ENCODE measurements at regions of chr1 and their contacts with region 1.

Region 1: DNA sequence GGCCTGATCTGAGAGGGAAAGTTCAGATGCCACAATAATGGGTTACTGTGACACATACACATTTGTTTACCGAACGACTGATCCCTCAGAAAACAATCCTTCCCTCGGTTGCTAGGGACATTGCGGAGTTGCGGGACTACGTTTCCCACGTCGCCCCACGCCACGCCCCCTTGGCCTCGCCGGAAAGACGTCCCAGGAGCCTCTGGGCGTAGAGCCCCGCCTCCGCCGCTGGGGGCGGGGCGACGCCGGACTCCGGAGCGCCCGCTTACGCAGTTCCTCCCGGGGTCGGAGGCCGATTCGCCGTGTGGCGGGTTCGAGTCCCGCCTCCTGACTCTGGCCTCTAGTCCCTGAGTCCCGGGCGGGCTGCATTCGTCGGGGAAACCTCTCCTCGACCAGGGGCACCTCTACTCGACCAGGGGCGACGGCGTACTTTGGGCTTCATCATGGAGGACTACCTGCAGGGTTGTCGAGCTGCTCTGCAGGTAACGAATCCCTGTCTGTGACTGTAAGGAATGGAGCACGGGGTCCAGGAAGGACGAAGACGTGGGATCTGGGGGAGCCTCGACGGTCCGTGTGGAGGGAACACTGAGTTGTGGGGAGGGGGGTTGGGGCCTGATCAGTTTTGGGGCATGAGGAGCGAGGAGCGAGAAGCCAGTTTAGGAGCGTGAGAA is at the start of gene PRUNE1:
- DNase-seq: peak; percentile 99
- ATAC-seq: peak; percentile 84
- H3K4me3 Mint-ChIP-seq: peak within 1 kb of the TSS; percentile 90
- H3K27ac Mint-ChIP-seq: peak within 1 kb of the TSS; percentile 96
- H3K4me1 Mint-ChIP-seq: peaks cover 63% of the 10 kb centered on the region
- H3K27me3 Mint-ChIP-seq: no peaks in the 10 kb centered on the region
- total RNA-seq, gene PRUNE1: 13.6 to 18.6 TPM

Region 2: GRCh38 chr1:150321826-150322166 is 686.5 kb before region 1 on chr1:
- CTCF ChIA-PET with region 1: no interaction called
- POLR2A ChIA-PET with region 1: no interaction called
- intact Hi-C with region 1: loop called in 1 of 2 experiments (anchors 1 kb)
- DNase-seq: no peak
- ATAC-seq: no peak
- H3K4me3 Mint-ChIP-seq: peak overlapping the region; percentile 93
- H3K27ac Mint-ChIP-seq: peak overlapping the region; percentile 100
- H3K4me1 Mint-ChIP-seq: peaks cover 27% of the 10 kb centered on the region
- H3K27me3 Mint-ChIP-seq: no peaks in the 10 kb centered on the region

Region 3: GRCh38 chr1:150629115-150629928 is 379.0 kb before region 1 on chr1 and contains the start of gene ENSA:
- CTCF ChIA-PET with region 1: no interaction called
- POLR2A ChIA-PET with region 1: interaction called, 7 read pairs
- intact Hi-C with region 1: loop called in 1 of 2 experiments (anchors 1 kb)
- DNase-seq: peak; percentile 97
- ATAC-seq: peak; percentile 89
- H3K4me3 Mint-ChIP-seq: no peak within 1 kb of the TSS
- H3K27ac Mint-ChIP-seq: no peak within 1 kb of the TSS
- H3K4me1 Mint-ChIP-seq: peaks cover 29% of the 10 kb centered on the region
- H3K27me3 Mint-ChIP-seq: no peaks in the 10 kb centered on the region
- total RNA-seq, gene ENSA: 197 to 240 TPM

Region 4: DNA sequence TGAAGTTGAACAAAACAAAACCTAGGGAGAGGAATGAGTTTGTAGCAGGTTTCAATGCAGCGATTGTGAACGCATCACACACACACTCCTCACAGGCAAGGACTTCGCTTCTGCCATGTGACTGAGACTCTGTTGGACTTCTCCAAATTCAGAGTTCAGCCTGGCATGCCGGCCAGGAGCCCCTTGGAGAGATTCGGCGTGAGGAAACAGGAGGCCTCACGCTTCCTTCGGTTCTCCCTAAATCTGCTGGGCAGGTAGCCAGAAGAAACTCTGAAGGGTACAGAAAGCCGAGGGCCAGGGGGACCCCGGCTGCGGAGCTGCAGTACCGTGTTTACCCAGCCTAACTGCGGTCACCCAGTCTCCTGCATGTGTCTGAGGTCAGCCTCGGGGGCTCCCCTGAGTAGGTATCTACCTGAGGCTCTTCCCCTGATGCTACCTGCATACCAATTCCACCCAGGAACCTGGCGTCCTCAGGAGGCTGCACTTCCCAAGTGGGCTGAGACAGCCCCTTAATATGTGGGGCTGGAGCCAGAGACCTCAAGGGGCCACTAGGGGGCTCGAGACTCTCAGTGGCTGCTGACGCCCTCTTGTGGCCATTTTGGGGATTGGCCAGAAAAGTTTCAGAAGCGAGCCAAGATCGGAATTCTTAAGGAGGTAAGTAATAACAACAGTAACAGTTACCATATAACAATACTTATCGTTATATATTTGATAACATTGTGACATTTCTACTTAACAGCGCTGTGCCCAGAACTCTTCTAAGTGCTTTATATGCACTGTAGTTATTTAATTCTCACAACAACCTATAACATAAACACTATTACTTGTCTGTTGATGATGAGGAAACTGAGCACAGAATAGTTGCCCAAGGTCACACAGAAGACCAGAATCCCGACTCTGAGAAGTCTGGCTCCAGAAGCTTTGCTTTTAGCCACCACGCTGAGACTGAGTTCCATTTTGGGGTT is 29.0 kb before region 1 on chr1:
- CTCF ChIA-PET with region 1: interaction called, 42 read pairs
- POLR2A ChIA-PET with region 1: interaction called, 9 read pairs
- intact Hi-C with region 1: loop called in 1 of 2 experiments (anchors 1 kb)
- DNase-seq: peak; percentile 94
- ATAC-seq: peak; percentile 53
- H3K4me3 Mint-ChIP-seq: no peak overlapping the region
- H3K27ac Mint-ChIP-seq: peak overlapping the region; percentile 63
- H3K4me1 Mint-ChIP-seq: peaks cover 39% of the 10 kb centered on the region
- H3K27me3 Mint-ChIP-seq: no peaks in the 10 kb centered on the region

Region 5: DNA sequence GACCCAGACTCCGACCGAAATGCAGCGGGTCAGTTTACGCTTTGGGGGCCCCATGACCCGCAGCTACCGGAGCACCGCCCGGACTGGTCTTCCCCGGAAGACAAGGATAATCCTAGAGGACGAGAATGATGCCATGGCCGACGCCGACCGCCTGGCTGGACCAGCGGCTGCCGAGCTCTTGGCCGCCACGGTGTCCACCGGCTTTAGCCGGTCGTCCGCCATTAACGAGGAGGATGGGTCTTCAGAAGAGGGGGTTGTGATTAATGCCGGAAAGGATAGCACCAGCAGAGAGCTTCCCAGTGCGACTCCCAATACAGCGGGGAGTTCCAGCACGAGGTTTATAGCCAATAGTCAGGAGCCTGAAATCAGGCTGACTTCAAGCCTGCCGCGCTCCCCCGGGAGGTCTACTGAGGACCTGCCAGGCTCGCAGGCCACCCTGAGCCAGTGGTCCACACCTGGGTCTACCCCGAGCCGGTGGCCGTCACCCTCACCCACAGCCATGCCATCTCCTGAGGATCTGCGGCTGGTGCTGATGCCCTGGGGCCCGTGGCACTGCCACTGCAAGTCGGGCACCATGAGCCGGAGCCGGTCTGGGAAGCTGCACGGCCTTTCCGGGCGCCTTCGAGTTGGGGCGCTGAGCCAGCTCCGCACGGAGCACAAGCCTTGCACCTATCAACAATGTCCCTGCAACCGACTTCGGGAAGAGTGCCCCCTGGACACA is 39.8 kb after region 1 on chr1:
- CTCF ChIA-PET with region 1: interaction called, 13 read pairs
- POLR2A ChIA-PET with region 1: interaction called, 5 read pairs
- intact Hi-C with region 1: loop called in 1 of 2 experiments (anchors 2 kb)
- DNase-seq: peak; percentile 75
- ATAC-seq: peak; percentile 80
- H3K4me3 Mint-ChIP-seq: peak overlapping the region; percentile 84
- H3K27ac Mint-ChIP-seq: peak overlapping the region; percentile 86
- H3K4me1 Mint-ChIP-seq: peaks cover 55% of the 10 kb centered on the region
- H3K27me3 Mint-ChIP-seq: no peaks in the 10 kb centered on the region

Region 6: DNA sequence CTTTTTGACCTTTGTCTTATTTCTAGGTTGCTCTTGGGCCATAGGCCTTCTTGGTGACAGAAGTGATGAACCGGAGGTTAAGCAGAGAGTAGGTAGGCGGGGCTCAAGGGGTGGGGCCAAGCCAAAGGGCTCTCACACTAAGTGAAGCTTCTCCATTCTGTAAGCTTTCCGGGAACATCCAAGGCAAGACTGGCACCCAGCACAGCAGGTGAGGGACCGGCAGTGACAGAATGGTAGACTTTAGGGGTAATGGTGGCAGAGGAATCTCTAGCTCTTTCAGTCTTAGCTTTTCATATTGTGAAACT is 148.1 kb after region 1 on chr1 and contains the start of gene TNFAIP8L2:
- CTCF ChIA-PET with region 1: interaction called, 10 read pairs
- POLR2A ChIA-PET with region 1: interaction called, 3 read pairs
- intact Hi-C with region 1: loop called (anchors 2 to 5 kb)
- DNase-seq: peak; percentile 91
- ATAC-seq: peak; percentile 85
- H3K4me3 Mint-ChIP-seq: peak within 1 kb of the TSS; percentile 88
- H3K27ac Mint-ChIP-seq: peak within 1 kb of the TSS; percentile 99
- H3K4me1 Mint-ChIP-seq: peaks cover 44% of the 10 kb centered on the region
- H3K27me3 Mint-ChIP-seq: no peaks in the 10 kb centered on the region
- total RNA-seq, gene TNFAIP8L2: 18.4 to 19.2 TPM

Region 7: GRCh38 chr1:151198255-151199127 is 190.2 kb after region 1 on chr1 and contains the start of gene PIP5K1A:
- CTCF ChIA-PET with region 1: no interaction called
- POLR2A ChIA-PET with region 1: no interaction called
- intact Hi-C with region 1: loop called in 1 of 2 experiments (anchors 2 kb)
- DNase-seq: peak; percentile 100
- ATAC-seq: peak; percentile 90
- H3K4me3 Mint-ChIP-seq: peak within 1 kb of the TSS; percentile 98
- H3K27ac Mint-ChIP-seq: peak within 1 kb of the TSS; percentile 100
- H3K4me1 Mint-ChIP-seq: peaks cover 38% of the 10 kb centered on the region
- H3K27me3 Mint-ChIP-seq: no peaks in the 10 kb centered on the region
- total RNA-seq, gene PIP5K1A: 74.5 to 85.1 TPM

Region 8: GRCh38 chr1:151251656-151252470 is 243.5 kb after region 1 on chr1:
- CTCF ChIA-PET with region 1: no interaction called
- POLR2A ChIA-PET with region 1: no interaction called
- intact Hi-C with region 1: no loop called
- DNase-seq: peak; percentile 79
- ATAC-seq: peak; percentile 47
- H3K4me3 Mint-ChIP-seq: no peak overlapping the region
- H3K27ac Mint-ChIP-seq: no peak overlapping the region
- H3K4me1 Mint-ChIP-seq: peaks cover 17% of the 10 kb centered on the region
- H3K27me3 Mint-ChIP-seq: no peaks in the 10 kb centered on the region

Region 9: DNA sequence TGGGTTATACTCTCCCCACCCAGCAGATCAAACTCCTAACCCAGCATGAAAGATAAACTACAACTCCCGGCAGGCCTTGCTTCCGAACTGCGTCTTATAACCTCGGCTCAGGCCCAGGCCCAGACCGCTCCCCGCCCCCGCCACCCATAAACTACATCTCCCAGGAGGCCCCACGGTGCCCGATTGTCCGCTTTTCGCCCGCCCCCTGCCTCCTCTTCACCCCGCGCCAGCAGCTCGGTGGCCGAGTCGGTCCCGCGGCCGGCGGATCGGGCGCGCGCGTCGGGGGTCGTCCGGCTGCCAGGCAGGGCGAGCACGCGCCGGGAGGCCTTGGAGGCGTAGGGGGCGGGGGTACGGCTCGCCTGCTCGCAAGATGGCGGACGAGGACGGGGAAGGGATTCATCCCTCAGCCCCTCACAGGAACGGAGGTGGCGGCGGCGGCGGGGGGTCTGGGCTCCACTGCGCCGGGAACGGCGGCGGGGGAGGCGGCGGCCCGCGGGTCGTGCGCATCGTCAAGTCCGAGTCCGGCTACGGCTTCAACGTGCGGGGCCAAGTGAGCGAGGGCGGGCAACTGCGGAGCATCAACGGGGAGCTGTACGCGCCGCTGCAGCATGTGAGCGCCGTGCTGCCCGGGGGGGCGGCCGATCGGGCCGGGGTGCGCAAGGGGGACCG is 603.6 kb after region 1 on chr1 and contains the start of gene SNX27:
- CTCF ChIA-PET with region 1: no interaction called
- POLR2A ChIA-PET with region 1: no interaction called
- intact Hi-C with region 1: no loop called
- DNase-seq: peak; percentile 95
- ATAC-seq: peak; percentile 93
- H3K4me3 Mint-ChIP-seq: peak within 1 kb of the TSS; percentile 99
- H3K27ac Mint-ChIP-seq: peak within 1 kb of the TSS; percentile 95
- H3K4me1 Mint-ChIP-seq: peaks cover 46% of the 10 kb centered on the region
- H3K27me3 Mint-ChIP-seq: peaks cover 6% of the 10 kb centered on the region
- total RNA-seq, gene SNX27: 28.5 to 29.1 TPM

Measured in activated CD4-positive, alpha-beta T cell treated with anti-CD3 and anti-CD28 coated beads for 36 hours (primary cell).